ENCODE measurements at regions of chr9 and their contacts with region 1.

Region 1: GRCh38 chr9:2158111-2158610 is 143.0 kb downstream of the SMARCA2 start:
- DNase-seq: peak; percentile 19
- H3K4me3 Mint-ChIP-seq: peak overlapping the region; percentile 93
- H3K27ac Mint-ChIP-seq: peak overlapping the region; percentile 96
- H3K4me1 Mint-ChIP-seq: peaks cover 35% of the 10 kb centered on the region
- H3K27me3 Mint-ChIP-seq: no peaks in the 10 kb centered on the region

Region 2: DNA sequence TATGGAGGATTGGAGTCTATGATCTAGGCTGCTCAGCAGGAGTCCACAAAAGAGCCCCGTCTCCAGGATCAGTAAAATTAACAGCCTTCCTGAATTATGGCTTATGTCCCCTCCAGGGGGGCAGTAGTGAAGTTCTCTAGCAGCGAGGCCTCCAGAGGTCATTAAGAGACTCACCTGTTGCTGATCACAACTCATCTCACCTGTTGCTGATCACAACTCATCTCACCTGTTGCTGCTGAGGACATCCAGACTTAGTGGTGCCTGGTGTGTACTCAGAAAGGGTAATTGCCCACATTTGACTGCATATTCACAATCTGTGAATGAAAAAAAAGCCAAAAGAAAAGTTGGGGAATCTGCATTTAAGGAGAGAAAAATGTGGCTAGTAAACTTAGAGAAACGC is 13.5 kb before region 1 on chr9:
- intact Hi-C with region 1: no loop called
- DNase-seq: no peak
- H3K4me3 Mint-ChIP-seq: no peak overlapping the region
- H3K27ac Mint-ChIP-seq: no peak overlapping the region
- H3K4me1 Mint-ChIP-seq: peaks cover 10% of the 10 kb centered on the region
- H3K27me3 Mint-ChIP-seq: no peaks in the 10 kb centered on the region

Region 3: DNA sequence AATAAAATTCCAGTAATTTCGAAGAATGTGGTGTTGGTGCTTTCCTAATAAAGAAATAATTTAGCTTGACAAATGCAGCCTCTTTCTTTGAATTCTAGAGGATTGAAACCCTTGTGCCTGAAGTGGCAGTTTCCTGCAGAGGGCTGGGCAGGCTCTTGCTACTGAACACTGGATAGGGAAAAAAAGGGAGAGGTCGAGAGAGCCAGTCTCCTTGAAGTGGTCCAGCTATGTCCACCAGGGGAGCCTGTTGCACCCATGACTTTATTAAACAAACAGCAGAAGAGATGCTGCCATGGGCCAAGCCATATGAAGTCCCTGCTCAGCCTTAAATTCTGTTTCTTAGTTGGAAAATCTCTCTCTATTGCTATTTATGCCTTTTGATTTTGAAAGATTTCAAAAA is 35.4 kb after region 1 on chr9:
- intact Hi-C with region 1: loop called (anchors 2 kb)
- DNase-seq: no peak
- H3K4me3 Mint-ChIP-seq: no peak overlapping the region
- H3K27ac Mint-ChIP-seq: peak overlapping the region; percentile 1
- H3K4me1 Mint-ChIP-seq: peaks cover 15% of the 10 kb centered on the region
- H3K27me3 Mint-ChIP-seq: no peaks in the 10 kb centered on the region